Ascending aorta (tissue), 2 donors: ENCODE measurements at regions of chr11 and their contacts with region 1.

Region 1: GRCh38 chr11:111977146-111978027 is 40.2 kb downstream of the DIXDC1 start:
- DNase-seq: peak; percentile 26 to 89
- H3K4me3 ChIP-seq: peak overlapping the region; percentile 58 to 97
- H3K27ac ChIP-seq: peak overlapping the region; percentile 92 to 99
- H3K4me1 ChIP-seq: peaks cover 3 to 25% of the 10 kb centered on the region in 2 donors
- H3K27me3 ChIP-seq: no peaks in the 10 kb centered on the region
- CTCF ChIP-seq: no peak

Region 2: DNA sequence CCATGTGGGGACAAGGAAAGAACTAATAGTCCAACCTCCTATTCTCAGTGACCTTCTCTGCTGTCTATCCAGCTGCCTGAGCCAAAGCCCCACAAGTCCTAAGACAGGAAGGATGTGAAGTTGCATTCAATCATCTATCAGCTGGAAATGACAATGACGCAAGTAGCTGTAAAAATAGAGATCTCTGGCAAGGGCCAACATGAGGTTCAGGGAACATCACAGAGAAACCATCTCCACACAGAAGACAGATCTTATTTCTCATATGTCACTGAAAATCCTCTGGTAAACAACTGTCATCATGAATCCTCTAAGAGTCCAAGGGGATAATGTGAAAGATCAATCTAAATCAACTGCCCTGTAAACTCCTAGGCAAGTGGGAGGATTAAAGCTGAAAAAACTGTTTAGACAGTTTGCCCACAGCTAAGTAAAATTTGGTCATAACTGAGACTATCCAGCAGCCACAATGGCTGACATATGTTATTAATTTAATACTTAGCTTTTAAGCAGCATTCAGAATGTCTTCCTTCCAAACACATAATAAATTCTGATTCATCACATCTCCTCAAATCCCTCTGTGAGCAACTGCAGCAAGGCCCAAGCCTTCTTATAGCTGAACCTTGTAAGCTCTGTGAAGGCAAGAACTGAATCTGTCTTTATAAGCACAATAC is 158.1 kb before region 1 on chr11:
- intact Hi-C with region 1: no loop called
- DNase-seq: no peak
- H3K4me3 ChIP-seq: no peak overlapping the region
- H3K27ac ChIP-seq: peak overlapping the region; percentile 27 to 40
- H3K4me1 ChIP-seq: no peaks in the 10 kb centered on the region
- H3K27me3 ChIP-seq: no peaks in the 10 kb centered on the region
- CTCF ChIP-seq: no peak

Region 3: DNA sequence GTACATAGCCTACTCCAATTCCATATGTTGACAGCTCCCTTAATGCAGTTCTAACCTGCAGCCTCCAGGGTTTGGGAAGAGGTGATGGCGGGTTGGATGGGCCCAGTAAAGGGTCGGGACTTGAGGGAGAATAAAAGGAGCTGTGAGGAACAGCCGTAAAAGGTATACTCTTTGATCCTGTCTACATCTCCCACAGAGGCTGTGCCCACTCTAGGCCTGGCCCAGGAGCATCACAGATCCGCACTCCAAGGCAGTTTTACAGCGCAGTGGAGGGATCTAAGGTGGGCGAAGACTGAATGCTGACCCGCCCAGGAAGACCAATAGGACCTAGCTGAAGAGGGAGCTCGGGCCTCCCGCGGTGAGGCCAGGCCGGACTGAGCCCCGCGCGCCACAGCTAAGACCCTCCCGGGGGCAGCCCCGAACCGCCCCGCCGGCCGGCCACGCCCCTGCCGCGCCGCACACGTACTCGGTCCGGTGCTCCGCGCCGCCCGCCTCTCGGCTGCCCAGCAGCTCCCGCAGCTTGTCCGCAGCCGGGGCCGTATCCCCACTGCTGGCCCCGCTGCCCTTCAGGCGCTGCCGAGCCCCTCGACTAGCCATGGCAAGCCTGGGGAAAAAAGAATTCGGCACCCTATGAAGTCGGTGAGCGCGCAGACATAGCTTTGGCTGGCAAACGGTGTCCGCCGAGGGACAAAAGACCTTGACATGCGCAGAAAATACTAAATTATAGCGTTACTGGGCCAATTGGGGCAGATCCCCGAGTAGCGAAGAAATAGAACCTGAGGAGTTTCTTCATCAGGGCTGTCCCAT is 106.3 kb before region 1 on chr11 and contains the start of gene ALG9:
- intact Hi-C with region 1: loop called (anchors 2 kb)
- DNase-seq: peak; percentile 22 to 89
- H3K4me3 ChIP-seq: peak within 1 kb of the TSS; percentile 92 to 97
- H3K27ac ChIP-seq: peak within 1 kb of the TSS; percentile 85 to 96
- H3K4me1 ChIP-seq: peaks cover 0 to 8% of the 10 kb centered on the region in 2 donors
- H3K27me3 ChIP-seq: no peaks in the 10 kb centered on the region
- CTCF ChIP-seq: peak in 1 of 3 experiments; percentile 40
- total RNA-seq, gene ALG9: 16.8 TPM

Region 4: GRCh38 chr11:111911563-111912401 is 65.6 kb before region 1 on chr11 and contains the start of gene CRYAB:
- intact Hi-C with region 1: loop called (anchors 1 kb)
- DNase-seq: peak; percentile 90 to 98
- H3K4me3 ChIP-seq: peak within 1 kb of the TSS; percentile 66 to 88
- H3K27ac ChIP-seq: peak within 1 kb of the TSS; percentile 98 to 99
- H3K4me1 ChIP-seq: peaks cover 0 to 9% of the 10 kb centered on the region in 2 donors
- H3K27me3 ChIP-seq: no peaks in the 10 kb centered on the region
- CTCF ChIP-seq: no peak
- total RNA-seq, gene CRYAB: 288 TPM

Region 5: GRCh38 chr11:111944651-111945051 is 32.7 kb before region 1 on chr11:
- intact Hi-C with region 1: loop called (anchors 1 kb)
- DNase-seq: no peak
- H3K4me3 ChIP-seq: peak overlapping the region in 1 of 2 donors; percentile 20
- H3K27ac ChIP-seq: peak overlapping the region; percentile 91 to 92
- H3K4me1 ChIP-seq: peaks cover 10 to 32% of the 10 kb centered on the region in 2 donors
- H3K27me3 ChIP-seq: no peaks in the 10 kb centered on the region
- CTCF ChIP-seq: no peak

Region 6: DNA sequence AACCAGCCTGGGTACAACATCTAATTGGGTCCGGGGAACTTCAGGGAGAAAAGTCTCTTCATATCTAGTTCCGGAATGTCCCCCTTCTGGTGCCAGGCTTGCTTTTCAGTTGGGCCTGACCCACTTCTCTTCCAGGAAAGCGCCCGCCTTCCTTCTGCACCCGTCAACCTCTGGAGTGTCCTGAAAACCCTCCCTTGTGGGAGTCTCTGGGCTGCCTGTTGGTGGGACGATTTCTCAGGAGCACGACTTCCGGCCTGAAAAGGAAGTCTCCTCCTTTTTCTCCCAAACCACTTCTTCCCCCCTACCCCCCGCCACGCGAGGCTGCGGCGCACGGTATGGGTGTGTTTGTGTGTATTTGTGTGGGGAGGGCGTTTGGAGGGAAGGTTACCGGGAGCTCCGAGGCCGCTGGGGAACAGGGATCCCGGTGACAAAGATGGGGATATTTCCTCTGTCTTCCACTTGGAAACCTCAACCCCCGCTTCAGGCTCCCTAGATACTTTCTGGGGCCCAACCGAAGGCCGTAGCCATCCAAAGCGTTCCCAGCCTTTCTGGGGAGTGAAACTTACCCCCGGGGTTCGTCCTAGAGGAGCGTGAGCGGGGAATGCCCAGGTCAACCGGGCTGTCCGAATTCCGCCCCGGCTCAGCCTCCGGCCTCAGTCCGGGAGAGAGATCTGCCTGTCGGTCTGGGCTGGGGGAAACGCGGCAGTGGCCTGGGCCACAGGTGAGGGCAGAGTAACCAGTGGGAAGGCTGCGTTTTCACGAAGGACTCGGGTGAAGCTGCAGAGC is 96.8 kb after region 1 on chr11 and contains the start of gene NKAPD1:
- intact Hi-C with region 1: loop called (anchors 5 kb)
- DNase-seq: peak; percentile 26 to 91
- H3K4me3 ChIP-seq: peak within 1 kb of the TSS; percentile 78 to 82
- H3K27ac ChIP-seq: peak within 1 kb of the TSS; percentile 87 to 92
- H3K4me1 ChIP-seq: peaks cover 0 to 6% of the 10 kb centered on the region in 2 donors
- H3K27me3 ChIP-seq: no peaks in the 10 kb centered on the region
- CTCF ChIP-seq: peak in 1 of 3 experiments; percentile 6
- total RNA-seq, gene NKAPD1: 12.2 TPM